Left cardiac atrium (tissue), 4 donors: ENCODE measurements at regions of chr7 and their contacts with region 1.

Region 1: DNA sequence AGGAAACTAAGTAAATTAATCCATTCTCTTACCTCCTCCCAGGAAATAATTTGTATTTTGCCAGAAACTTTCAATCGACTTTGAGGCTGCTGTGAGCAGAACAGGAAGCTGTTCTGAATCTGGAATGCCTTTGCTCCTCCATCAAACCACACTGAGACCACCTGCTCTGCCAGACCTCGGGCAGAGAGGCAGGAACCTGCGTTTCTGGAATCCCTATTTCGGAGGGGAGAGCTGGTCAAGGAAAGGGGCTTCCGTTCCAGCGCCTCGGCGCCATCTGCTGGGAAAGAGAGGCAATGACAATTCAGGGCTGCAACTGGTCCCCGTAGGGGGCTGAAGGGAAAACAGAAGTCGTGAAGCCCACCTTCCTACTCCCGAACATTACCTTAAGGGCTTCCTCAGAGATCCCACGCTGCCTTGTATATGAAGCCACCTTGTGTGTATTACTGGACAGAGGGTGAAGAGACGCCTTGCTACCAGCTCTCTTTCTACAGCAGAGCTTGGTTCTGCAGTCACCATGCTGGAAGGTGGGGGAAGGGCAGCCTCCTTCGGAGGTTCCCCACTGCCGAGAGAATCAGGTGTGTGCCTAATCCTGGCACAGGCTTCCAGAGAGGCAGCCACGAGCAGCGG is 31.2 kb downstream of the ZNF467 start:
- DNase-seq: peak; percentile 66
- ATAC-seq: peak; percentile 80 to 89

Region 2: GRCh38 chr7:149662591-149663095 is 79.5 kb before region 1 on chr7:
- intact Hi-C with region 1: loop called in 1 of 2 experiments (anchors 10 kb)
- DNase-seq: peak; percentile 53
- ATAC-seq: peak; percentile 90 to 97

Region 3: GRCh38 chr7:149669121-149669818 is 72.9 kb before region 1 on chr7:
- intact Hi-C with region 1: loop called (anchors 1 to 10 kb)
- DNase-seq: no peak
- ATAC-seq: no peak